ENCODE measurements at regions of chr9 and their contacts with region 1.

Region 1: GRCh38 chr9:37592108-37592951 is at the start of gene TOMM5:
- DNase-seq: peak; percentile 96
- H3K4me3 ChIP-seq: peak within 1 kb of the TSS; percentile 82 to 86 (median 85)
- H3K27ac ChIP-seq: peak within 1 kb of the TSS; percentile 81 to 90 (median 84)
- H3K4me1 ChIP-seq: peaks cover 0 to 48% (median 28%) of the 10 kb centered on the region in 4 donors
- H3K27me3 ChIP-seq: no peaks in the 10 kb centered on the region
- CTCF ChIP-seq: no peak
- EP300 ChIP-seq: peak in 1 of 4 donors; percentile 69
- POLR2A ChIP-seq: peak; percentile 79 to 91
- total RNA-seq, gene TOMM5: 69.2 to 173 (median 134) TPM

Region 2: GRCh38 chr9:36612946-36613345 is 979.4 kb before region 1 on chr9:
- intact Hi-C with region 1: no loop called
- DNase-seq: no peak
- H3K4me3 ChIP-seq: no peak overlapping the region
- H3K27ac ChIP-seq: no peak overlapping the region
- H3K4me1 ChIP-seq: no peaks in the 10 kb centered on the region
- H3K27me3 ChIP-seq: no peaks in the 10 kb centered on the region
- CTCF ChIP-seq: no peak
- EP300 ChIP-seq: no peak
- POLR2A ChIP-seq: no peak

Region 3: GRCh38 chr9:37422289-37423104 is 169.8 kb before region 1 on chr9 and contains the start of gene GRHPR:
- intact Hi-C with region 1: loop called (anchors 5 kb)
- DNase-seq: peak; percentile 93
- H3K4me3 ChIP-seq: peak within 1 kb of the TSS; percentile 72 to 91 (median 76)
- H3K27ac ChIP-seq: peak within 1 kb of the TSS; percentile 87 to 93 (median 88)
- H3K4me1 ChIP-seq: peaks cover 0 to 38% (median 31%) of the 10 kb centered on the region in 4 donors
- H3K27me3 ChIP-seq: no peaks in the 10 kb centered on the region
- CTCF ChIP-seq: no peak
- EP300 ChIP-seq: no peak
- POLR2A ChIP-seq: peak; percentile 52 to 67
- total RNA-seq, gene GRHPR: 127 to 165 (median 157) TPM

Region 4: DNA sequence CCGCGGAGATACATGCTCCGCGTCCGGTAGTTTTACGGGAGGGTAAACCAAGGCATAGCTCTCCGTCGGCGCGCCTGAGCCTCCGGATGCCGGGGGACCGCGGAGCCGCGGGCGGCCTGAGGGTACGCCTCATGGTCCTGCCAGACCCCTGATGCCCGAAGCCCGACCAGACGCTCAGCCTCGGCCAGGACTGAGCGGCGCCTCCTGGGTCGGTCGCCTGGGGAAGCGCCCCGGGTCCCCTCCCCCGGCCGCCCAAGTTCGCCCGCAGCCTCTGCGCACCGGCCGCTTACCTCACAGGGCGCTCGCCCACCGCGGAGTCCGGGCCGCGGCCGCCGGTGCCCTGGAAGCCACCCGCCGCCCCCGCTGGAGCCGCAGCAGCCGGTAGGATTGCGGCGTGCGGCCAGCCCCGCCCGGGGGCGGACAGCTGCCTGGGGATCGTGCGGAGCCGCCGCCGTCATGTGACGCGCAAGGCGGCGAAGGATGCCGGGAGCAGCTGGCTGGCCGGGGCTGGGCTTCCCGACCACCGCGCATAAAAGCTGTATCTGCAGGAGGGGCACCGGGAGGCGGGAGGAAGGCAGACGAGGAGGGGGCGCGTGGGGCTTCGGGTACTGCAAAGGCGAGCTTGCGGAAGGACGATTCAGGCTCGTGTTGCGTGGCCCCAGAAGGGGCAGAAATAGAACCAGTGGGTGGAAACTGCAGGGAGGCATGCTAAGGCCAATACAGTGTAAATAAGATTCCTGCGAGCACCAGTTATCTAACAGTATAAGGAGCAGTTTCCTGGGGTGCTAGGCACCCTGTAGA is 16.2 kb before region 1 on chr9 and contains the start of gene FBXO10:
- intact Hi-C with region 1: loop called (anchors 2 kb)
- DNase-seq: peak; percentile 88
- H3K4me3 ChIP-seq: peak within 1 kb of the TSS; percentile 59 to 90 (median 75)
- H3K27ac ChIP-seq: peak within 1 kb of the TSS; percentile 85 to 97 (median 96)
- H3K4me1 ChIP-seq: peaks cover 0 to 37% (median 29%) of the 10 kb centered on the region in 4 donors
- H3K27me3 ChIP-seq: no peaks in the 10 kb centered on the region
- CTCF ChIP-seq: no peak
- EP300 ChIP-seq: peak in 1 of 4 donors; percentile 6
- POLR2A ChIP-seq: peak in 1 of 2 donors; percentile 32
- total RNA-seq, gene FBXO10: 14.8 to 19.4 (median 16.3) TPM

Region 5: GRCh38 chr9:37753489-37754190 is 161.3 kb after region 1 on chr9 and contains the start of gene TRMT10B:
- intact Hi-C with region 1: loop called (anchors 5 kb)
- DNase-seq: peak; percentile 75
- H3K4me3 ChIP-seq: peak within 1 kb of the TSS; percentile 67 to 80 (median 68)
- H3K27ac ChIP-seq: peak within 1 kb of the TSS; percentile 79 to 86 (median 81)
- H3K4me1 ChIP-seq: peaks cover 0 to 10% (median 7%) of the 10 kb centered on the region in 4 donors
- H3K27me3 ChIP-seq: no peaks in the 10 kb centered on the region
- CTCF ChIP-seq: peak in 2 of 4 experiments; percentile 20 to 21
- EP300 ChIP-seq: no peak
- POLR2A ChIP-seq: peak; percentile 8 to 14
- total RNA-seq, gene TRMT10B: 5.3 to 9.7 (median 7.9) TPM

Region 6: GRCh38 chr9:38392235-38393127 is 800.2 kb after region 1 on chr9 and contains the start of gene ALDH1B1:
- intact Hi-C with region 1: loop called (anchors 10 kb)
- DNase-seq: peak; percentile 93
- H3K4me3 ChIP-seq: peak within 1 kb of the TSS; percentile 64 to 88 (median 72)
- H3K27ac ChIP-seq: peak within 1 kb of the TSS; percentile 84 to 97 (median 88)
- H3K4me1 ChIP-seq: peaks cover 0 to 84% (median 59%) of the 10 kb centered on the region in 4 donors
- H3K27me3 ChIP-seq: no peaks in the 10 kb centered on the region
- CTCF ChIP-seq: no peak
- EP300 ChIP-seq: peak in 1 of 4 donors; percentile 7
- POLR2A ChIP-seq: peak; percentile 65 to 75
- total RNA-seq, gene ALDH1B1: 35.7 to 162 (median 101) TPM

Measured in sigmoid colon (tissue), 7 donors.